Left cardiac atrium (tissue), 4 donors: ENCODE measurements at regions of chr9 and their contacts with region 1.

Region 1: GRCh38 chr9:133375724-133376654 is at the starts of genes STKLD1 and SURF4:
- DNase-seq: peak; percentile 97
- ATAC-seq: peak; percentile 98
- total RNA-seq, gene STKLD1: 0.77 to 1.1 TPM
- total RNA-seq, gene SURF4: 95.4 to 127 TPM

Region 2: DNA sequence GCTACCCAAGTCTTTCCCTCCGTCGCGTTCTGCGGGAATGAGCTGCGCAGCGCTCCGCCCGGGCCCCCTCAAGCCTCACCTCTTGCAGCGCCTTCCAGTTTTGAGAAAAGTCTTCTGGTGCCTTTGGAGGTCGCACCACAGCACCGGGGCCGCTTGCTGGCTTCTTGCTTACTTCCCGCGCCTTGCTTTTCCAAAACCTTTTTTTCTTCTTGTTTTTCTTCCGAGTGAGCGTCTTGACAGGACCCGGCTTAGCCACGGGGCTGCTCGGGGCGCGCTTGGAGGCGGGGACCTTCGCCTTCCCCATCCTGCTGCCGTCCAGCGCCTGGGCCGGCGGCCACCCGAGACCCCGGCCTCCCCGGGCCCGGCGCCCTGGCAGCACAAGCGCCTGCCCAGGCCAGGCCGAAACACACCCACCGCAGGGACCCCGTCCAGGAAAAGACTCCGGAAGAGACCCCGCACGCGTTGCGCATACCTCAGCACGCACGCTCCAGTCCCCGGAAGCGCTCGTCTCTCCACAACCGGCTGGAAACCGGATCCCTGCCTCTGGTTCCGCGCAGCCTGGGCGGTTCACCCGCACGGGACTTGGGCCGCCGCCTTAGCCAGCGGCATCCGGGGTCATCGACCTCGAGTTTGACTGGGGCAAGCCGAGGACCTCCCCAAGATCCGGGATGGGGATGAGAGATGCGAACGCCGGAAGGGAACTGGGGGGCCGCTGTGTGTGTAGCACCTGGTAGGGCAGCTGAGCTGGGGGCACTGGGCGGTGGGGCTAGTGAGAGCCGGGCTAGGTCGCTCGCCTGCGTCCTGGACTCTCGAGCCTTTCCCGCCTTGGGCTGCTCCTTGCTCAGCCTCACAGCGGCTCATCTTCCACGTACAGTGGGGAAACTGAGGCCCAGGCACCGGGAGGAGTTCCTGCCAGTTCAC is 41.8 kb after region 1 on chr9 and contains the start of gene REXO4:
- intact Hi-C with region 1: loop called in 1 of 2 experiments (anchors 5 kb)
- DNase-seq: peak; percentile 87
- ATAC-seq: peak; percentile 97 to 98
- total RNA-seq, gene REXO4: 12.2 to 12.6 TPM